ENCODE measurements at regions of chr18 and their contacts with region 1.

Region 1: GRCh38 chr18:22983175-22983574 is 50.0 kb downstream of the RBBP8 start:
- DNase-seq: no peak
- ATAC-seq: no peak

Region 2: GRCh38 chr18:21760321-21760720 is 1222.9 kb before region 1 on chr18:
- intact Hi-C with region 1: no loop called
- DNase-seq: no peak
- ATAC-seq: no peak

Region 3: DNA sequence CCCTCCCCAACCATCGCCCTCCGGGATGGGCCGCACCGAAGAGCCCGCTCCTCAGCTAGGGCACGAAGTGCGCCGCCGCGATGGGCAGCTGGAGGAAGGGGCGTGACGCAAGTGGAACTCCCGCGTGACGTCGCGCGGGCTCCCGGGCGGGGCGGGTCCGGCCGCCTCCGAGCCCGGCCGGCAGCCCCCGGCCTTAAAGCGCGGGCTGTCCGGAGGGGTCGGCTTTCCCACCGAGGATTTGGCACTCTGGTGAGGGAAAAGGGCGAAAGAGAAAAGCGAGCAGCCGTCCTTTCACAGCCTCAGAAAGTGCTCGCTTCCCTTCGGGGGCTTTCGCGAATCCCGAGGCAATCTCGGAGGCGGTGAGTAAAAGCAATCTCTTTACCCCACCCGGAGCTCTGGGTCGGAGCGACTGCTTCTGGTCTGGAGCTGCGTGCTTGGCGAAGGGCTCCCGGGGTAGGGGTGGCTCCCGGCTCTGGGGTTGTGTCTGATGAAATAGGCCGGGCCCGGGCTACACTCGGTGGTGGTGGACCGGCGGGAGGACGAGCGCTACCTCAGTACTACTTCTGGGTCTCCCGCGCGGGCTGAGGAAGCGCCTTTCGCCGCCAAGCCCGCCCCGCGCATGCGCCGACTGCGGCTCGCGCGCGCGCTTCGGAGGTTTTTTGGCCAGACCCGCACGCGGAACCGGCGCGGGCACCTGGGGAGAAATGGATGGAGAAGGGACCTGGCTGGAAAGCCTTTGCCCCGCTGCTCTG is 49.8 kb before region 1 on chr18 and contains the start of gene RBBP8:
- intact Hi-C with region 1: loop called (anchors 10 kb)
- DNase-seq: peak; percentile 92
- ATAC-seq: peak; percentile 97
- total RNA-seq, gene RBBP8: 12.7 TPM

Region 4: DNA sequence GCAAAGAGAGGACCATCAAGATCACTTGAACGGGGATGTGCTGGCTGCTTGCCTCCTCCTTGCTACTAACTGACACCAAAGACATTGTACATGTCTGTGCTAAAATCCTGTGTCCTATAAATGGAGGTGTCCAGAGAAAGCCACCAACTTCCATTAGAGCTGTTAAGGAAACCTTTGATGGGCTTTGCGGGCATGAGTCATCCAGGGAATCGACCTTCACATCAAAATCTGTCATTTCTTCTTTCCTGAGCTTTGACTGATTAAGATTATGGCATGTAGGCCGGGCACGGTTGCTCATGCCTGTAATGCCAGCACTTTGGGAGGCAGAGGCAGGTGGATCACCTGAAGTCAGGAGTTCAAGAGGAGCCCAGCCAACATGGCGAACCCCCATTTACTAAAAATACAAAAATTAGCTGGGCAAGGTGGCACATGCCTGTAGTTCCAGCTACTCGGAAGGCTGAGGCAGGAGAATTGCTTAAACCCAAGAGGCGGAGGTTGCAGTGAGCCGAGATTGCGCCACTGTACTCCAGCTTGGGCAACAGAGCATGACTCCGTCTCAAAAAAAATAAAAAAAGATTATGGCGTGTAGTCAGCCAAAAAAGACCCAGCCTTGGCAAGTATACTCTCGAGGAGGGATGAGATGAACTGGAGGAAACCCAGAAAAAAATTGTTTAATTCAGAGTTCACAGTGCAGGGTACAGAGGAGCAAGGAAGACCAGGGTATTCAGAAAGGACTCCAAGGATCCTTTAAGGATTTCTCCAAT is 267.9 kb after region 1 on chr18:
- intact Hi-C with region 1: no loop called
- DNase-seq: no peak
- ATAC-seq: peak; percentile 72

Region 5: DNA sequence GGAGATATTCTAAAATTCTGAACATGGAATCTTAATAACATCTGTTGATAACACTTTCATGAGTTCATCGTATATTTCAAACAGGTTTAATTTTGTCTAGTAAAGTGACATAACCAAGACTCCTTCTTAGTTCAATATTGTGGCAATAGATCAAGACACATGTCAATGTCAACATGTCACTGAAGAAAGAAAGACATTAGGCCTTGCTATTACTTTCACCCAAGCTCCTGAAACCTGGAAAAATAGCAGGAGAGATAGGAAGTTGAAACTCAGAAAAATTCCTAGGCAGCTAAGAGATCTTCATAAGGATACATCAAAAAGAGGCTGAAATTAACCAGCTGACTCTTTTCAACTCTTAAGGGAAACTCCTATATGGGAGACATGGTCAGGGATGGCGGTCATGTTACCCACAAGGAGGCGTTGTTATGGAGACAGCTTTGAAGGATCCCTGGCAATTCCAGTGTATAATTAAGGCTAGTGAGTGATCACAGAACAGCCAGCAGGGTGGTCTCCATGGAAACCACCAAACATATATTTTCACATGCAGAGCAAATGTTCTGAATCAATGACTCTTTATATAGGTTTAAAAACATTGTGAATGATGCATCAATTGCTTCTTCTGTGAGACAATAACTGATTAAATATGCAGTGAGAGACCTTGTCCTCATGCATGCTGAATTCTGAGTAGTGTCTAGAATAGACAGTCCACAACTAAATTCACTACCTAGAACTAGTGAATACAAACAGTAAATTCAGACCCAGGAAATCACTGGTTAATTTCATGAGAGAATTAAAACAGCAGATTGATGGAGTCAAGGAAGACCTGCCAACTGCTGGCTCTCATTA is 354.6 kb after region 1 on chr18:
- intact Hi-C with region 1: no loop called
- DNase-seq: no peak
- ATAC-seq: no peak

Region 6: GRCh38 chr18:24811950-24812681 is 1828.9 kb after region 1 on chr18:
- intact Hi-C with region 1: no loop called
- DNase-seq: no peak
- ATAC-seq: no peak

Measured in sciatic nerve (tissue), 2 donors.